ENCODE measurements at regions of chr2 and their contacts with region 1.

Region 1: GRCh38 chr2:233049194-233049761 is 10.9 kb upstream of the INPP5D start:
- DNase-seq: peak in 1 of 2 donors; percentile 61
- H3K4me3 ChIP-seq: no peak overlapping the region
- CTCF ChIP-seq: no peak
- POLR2A ChIP-seq: no peak

Region 2: DNA sequence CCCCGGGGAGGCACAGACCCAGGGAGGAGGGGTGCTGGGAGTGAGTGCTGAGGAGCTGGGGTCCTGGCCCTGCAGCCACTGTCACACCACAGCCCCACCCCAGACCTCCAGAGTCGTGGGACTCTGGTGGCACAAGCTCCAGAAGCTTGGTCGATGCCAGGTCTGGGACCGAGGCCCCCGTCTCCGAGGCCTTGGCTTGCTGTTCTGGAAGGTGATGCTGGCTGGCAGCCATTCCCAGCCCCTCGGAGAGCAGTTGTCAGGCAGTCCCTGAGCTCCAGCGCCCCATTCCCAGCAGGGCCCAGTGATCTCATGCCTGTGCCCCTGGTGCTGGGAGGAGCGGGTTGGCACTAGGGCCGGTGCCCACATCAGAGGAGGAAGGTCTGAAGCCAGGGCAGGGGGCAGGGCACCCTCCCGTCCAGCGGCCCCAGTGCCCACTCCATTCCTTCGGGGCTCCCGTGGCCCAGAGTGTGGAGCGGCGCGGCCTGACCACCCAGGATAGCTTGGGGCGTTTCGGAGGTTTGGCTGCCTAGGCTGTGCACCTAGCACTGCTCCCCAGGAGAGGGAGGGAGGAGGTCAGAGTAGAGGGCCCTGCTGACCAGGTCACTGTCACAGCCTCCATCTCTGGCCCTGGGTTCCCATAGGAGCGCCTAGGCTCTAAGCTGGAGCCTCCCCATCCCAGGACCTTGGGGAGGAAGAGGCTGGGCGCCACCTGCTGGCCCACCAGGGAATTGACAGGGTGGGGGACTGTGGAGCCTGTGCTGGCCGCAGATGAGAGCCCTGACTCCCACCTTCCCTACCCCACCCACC is 610.1 kb before region 1 on chr2:
- intact Hi-C with region 1: no loop called
- DNase-seq: no peak
- H3K4me3 ChIP-seq: no peak overlapping the region
- CTCF ChIP-seq: no peak
- POLR2A ChIP-seq: no peak

Region 3: GRCh38 chr2:232854082-232854481 is 195.2 kb before region 1 on chr2:
- intact Hi-C with region 1: loop called (anchors 10 kb)
- DNase-seq: no peak
- H3K4me3 ChIP-seq: no peak overlapping the region
- CTCF ChIP-seq: no peak
- POLR2A ChIP-seq: no peak

Region 4: GRCh38 chr2:233746475-233747282 is 697.4 kb after region 1 on chr2:
- intact Hi-C with region 1: no loop called
- DNase-seq: no peak
- H3K4me3 ChIP-seq: no peak overlapping the region
- CTCF ChIP-seq: no peak
- POLR2A ChIP-seq: no peak

Measured in lower leg skin (tissue), 4 donors.